Dorsolateral prefrontal cortex (tissue), 120 donors: ENCODE measurements at regions of chr6 and their contacts with region 1.

Region 1: DNA sequence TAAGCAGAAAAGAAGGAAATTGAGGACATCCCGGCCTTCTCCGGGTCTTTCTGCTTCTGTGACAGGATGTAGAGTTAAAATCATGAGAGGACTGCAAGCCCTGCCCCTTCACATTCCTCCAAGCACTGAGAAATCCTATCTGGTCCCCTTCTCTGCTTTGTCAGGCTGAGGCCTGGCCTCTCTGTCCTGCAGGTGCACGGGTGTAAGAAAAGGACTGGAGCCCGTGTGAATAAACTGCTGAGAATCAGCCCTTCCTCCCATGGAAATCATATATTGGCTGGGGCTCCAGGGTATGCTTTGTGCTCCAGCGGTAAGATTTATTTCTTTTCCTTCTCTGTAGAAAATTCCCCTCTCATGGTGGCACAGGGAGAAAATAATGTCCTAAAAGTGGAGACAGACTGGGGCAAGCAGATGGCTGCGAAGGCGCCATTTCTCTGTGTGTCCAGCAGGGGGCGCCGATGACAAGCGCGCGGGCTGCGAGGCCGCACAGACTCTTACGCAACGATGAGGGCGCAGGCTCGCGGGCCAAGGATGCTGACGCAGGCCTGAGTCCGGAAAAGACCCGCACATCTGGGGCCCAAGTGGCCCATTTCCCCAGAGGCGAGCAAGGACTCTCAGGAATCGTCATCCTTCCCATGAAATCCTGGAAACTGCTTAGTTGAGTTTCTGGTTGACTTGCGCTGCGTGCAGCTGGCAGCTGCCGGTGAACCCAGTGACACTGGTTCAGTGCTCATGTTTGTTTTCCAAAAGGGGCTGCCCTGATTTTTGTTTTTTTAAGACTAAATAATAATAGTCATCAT is 258.6 kb downstream of the ADGB start:
- DNase-seq: peak; percentile 81 to 92 (median 90)
- H3K4me3 ChIP-seq: peak overlapping the region; percentile 26 to 71 (median 57)
- H3K27ac ChIP-seq: peak overlapping the region; percentile 70 to 97 (median 91)
- H3K27me3 ChIP-seq: no peaks in the 10 kb centered on the region
- CTCF ChIP-seq: peak; percentile 97 to 100 (median 99)

Region 2: GRCh38 chr6:146582885-146583284 is 274.5 kb before region 1 on chr6:
- intact Hi-C with region 1: no loop called
- DNase-seq: peak in 3 of 10 donors; percentile 8 to 43 (median 25)
- H3K4me3 ChIP-seq: no peak overlapping the region
- H3K27ac ChIP-seq: no peak overlapping the region
- H3K27me3 ChIP-seq: no peaks in the 10 kb centered on the region
- CTCF ChIP-seq: no peak

Region 3: DNA sequence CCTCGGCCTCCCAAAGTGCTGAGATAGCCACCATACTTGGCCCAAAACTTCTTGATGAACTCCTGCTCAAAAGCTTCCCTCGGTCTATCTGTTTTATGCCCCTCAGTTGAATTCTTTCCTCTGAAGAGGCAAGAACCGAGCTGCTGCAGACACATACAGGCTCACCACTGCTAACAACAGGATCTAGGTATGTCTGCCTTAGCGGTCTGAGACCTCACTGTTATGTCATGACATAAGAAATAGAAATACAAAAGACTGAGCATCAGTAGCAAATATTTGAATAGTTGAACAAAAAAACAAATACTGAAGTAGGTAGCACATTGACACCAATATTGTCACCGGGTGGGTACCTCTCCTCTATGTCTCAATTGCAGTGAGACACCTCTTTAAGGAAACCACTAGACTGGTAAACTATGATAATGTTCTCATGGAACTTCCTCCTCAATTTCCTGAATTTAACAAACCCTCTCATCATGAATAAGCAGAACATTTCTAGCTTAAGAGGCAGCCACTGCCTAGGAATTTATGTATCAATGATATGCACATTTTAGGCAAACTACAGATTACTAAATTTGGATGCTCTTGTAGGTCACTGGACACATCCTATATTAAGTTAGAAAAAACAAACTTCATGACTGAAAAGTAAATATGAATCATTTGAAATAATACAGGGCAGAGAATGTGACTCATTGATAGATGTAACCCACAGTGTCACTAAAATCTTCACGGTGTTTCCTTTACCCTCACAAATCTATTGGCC is 337.5 kb after region 1 on chr6:
- intact Hi-C with region 1: loop called in 1 of 2 experiments (anchors 5 kb)
- DNase-seq: no peak
- H3K4me3 ChIP-seq: no peak overlapping the region
- H3K27ac ChIP-seq: no peak overlapping the region
- H3K27me3 ChIP-seq: no peaks in the 10 kb centered on the region
- CTCF ChIP-seq: no peak

Region 4: GRCh38 chr6:147202516-147203312 is 345.3 kb after region 1 on chr6:
- intact Hi-C with region 1: loop called (anchors 1 to 5 kb)
- DNase-seq: peak; percentile 63 to 94 (median 88)
- H3K4me3 ChIP-seq: peak overlapping the region; percentile 66 to 96 (median 84)
- H3K27ac ChIP-seq: peak overlapping the region; percentile 86 to 99 (median 98)
- H3K27me3 ChIP-seq: no peaks in the 10 kb centered on the region
- CTCF ChIP-seq: peak in 6 of 56 donors; percentile 1 to 30 (median 8)

Region 5: DNA sequence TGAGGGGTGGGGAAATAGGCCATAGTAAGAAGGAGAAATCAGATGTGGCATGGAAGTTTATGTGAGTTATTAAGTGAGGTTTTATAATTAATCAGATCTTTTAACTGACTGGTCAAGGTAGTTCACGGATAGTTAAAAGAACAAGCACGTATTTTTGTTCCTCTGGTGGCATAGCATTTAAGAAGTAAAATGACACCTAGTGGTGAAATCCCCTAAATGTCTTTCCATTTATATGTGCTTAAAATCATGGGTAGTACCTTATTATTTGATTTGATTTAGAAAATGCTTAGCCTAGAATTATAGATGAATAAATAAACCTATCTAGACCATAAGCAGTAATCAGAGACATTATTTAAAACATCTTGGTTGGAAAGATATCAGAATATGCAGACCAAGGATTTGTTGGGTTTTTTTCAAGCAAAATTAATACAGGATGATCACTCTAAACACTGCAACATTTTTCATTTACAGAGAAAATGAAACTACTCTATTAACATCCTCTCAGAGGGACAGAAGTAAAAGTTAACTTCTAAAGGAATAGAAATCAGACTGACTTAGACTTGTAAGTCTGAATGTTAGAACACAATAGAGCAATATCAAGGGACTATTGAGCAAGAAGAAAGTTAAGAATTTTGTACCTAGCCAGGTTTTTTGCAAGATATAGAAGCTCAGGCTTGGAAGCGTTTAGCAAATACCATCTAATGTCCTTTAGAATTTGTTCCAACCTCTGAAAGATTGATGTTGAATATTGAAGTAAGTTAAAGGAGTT is 427.9 kb after region 1 on chr6:
- intact Hi-C with region 1: loop called (anchors 5 kb)
- DNase-seq: no peak
- H3K4me3 ChIP-seq: no peak overlapping the region
- H3K27ac ChIP-seq: peak overlapping the region in 1 of 59 donors; percentile 5
- H3K27me3 ChIP-seq: no peaks in the 10 kb centered on the region
- CTCF ChIP-seq: peak; percentile 47 to 81 (median 66)

Region 6: DNA sequence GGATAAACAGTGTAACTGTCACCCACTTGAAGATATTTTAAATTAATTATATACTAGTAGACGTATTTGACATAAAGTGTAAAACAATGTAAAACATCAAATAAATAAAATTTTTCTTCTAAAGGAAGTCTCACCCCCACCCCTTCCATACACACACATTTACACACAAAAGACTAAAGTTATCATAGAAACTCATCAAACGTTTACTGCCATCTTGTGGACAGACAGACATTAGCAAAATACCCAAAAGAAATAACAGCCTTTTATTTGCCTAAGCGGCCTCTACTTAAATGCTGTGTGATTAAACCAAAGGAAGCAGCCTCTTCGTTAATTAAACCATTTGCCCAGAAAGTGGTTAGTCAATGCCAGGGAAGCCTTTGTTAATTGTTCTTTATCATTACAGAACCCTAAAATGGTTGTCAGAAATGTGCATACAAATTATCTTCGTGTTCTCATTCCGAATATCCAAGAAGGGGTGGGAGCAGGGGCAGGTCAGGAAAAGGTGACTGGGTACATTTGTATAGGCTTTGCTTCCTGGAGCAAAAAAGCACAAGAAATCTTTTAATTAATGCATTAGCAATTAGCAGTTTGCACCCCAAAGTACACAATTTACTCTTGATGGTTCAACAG is 1309.1 kb after region 1 on chr6:
- intact Hi-C with region 1: loop called in 1 of 2 experiments (anchors 10 kb)
- DNase-seq: no peak
- H3K4me3 ChIP-seq: no peak overlapping the region
- H3K27ac ChIP-seq: no peak overlapping the region
- H3K27me3 ChIP-seq: peaks cover 0 to 4% (median 0%) of the 10 kb centered on the region in 45 donors
- CTCF ChIP-seq: peak; percentile 53 to 92 (median 79)